ENCODE measurements at regions of chr4 and their contacts with region 1.

Region 1: GRCh38 chr4:82842593-82842992 is 44.0 kb upstream of the SCD5 start:
- DNase-seq: peak in 1 of 35 experiments; percentile 19
- ATAC-seq: no peak
- H3K4me3 ChIP-seq: no peak overlapping the region
- H3K4me3 Mint-ChIP-seq: no peak overlapping the region
- H3K27ac ChIP-seq: no peak overlapping the region
- H3K27ac Mint-ChIP-seq: no peak overlapping the region
- H3K4me1 ChIP-seq: no peaks in the 10 kb centered on the region
- H3K4me1 Mint-ChIP-seq: no peaks in the 10 kb centered on the region
- H3K27me3 ChIP-seq: no peaks in the 10 kb centered on the region
- H3K27me3 Mint-ChIP-seq: no peaks in the 10 kb centered on the region

Region 2: DNA sequence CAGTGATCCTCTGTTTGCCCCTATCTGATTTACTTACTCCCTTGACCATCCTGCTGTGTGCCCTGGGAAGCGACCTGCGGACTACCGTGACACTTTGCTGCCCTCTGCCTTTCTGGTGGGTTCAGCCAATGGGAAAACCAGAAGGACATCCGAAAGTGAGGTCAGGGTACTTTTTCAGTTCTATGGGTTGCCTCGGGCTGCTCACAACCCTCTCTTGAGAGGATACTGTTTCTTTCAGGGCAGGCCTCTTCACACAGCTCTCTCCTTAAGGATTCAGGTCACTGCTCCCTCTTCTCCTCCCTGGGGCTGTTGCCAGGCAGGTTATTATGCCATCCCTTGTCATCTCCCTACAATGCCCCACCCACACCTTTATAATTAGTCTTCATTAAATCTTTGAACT is 250.5 kb after region 1 on chr4:
- CTCF ChIA-PET with region 1: no interaction called
- POLR2A ChIA-PET with region 1: interaction called in 1 of 2 experiments, 15 read pairs
- DNase-seq: no peak
- ATAC-seq: no peak
- H3K4me3 ChIP-seq: no peak overlapping the region
- H3K4me3 Mint-ChIP-seq: no peak overlapping the region
- H3K27ac ChIP-seq: no peak overlapping the region
- H3K27ac Mint-ChIP-seq: peak overlapping the region; percentile 47 to 60
- H3K4me1 ChIP-seq: peaks cover 2 to 9% of the 10 kb centered on the region in 2 experiments
- H3K4me1 Mint-ChIP-seq: peaks cover 35 to 67% (median 56%) of the 10 kb centered on the region in 3 donors
- H3K27me3 ChIP-seq: no peaks in the 10 kb centered on the region
- H3K27me3 Mint-ChIP-seq: no peaks in the 10 kb centered on the region